ENCODE measurements at regions of chr11 and their contacts with region 1.

Region 1: GRCh38 chr11:102940714-102941588 is 14.6 kb downstream of the MMP13 start:
- H3K4me3 Mint-ChIP-seq: no peak overlapping the region
- H3K27ac Mint-ChIP-seq: peak overlapping the region; percentile 27
- H3K4me1 Mint-ChIP-seq: peaks cover 22% of the 10 kb centered on the region
- H3K27me3 Mint-ChIP-seq: peaks cover 31% of the 10 kb centered on the region

Region 2: DNA sequence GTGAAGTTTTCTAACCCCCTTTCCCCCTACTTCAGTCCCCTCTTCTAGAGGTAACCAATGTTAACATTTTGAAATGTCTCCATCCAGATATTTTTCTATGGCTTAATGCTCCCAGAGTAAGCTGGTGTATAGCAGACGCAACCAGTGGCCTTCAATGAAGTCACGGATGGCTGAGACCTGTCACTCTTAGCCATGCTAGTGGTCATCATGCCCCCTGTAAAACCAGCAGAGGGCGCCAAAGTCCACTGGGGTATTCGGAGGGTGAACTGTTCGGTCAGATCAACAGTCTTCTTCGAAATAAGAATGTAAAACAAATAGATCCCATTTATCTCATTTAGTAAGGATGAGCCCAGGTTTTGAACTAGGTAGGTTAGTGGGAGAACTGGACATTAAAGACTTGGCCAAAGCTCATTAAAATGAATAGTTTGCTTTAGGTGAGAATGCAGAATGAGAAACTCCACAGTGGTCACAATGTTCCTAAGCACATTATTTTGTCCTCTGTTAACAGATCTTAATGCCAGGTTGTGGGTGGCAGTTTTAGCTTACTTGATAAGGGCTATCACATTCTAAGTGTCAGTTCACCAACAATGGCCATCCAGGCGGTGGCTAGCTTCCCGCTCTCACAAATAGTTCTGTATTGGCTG is 207.6 kb before region 1 on chr11:
- intact Hi-C with region 1: loop called (anchors 1 kb)
- H3K4me3 Mint-ChIP-seq: no peak overlapping the region
- H3K27ac Mint-ChIP-seq: no peak overlapping the region
- H3K4me1 Mint-ChIP-seq: peaks cover 16% of the 10 kb centered on the region
- H3K27me3 Mint-ChIP-seq: peaks cover 37% of the 10 kb centered on the region

Region 3: DNA sequence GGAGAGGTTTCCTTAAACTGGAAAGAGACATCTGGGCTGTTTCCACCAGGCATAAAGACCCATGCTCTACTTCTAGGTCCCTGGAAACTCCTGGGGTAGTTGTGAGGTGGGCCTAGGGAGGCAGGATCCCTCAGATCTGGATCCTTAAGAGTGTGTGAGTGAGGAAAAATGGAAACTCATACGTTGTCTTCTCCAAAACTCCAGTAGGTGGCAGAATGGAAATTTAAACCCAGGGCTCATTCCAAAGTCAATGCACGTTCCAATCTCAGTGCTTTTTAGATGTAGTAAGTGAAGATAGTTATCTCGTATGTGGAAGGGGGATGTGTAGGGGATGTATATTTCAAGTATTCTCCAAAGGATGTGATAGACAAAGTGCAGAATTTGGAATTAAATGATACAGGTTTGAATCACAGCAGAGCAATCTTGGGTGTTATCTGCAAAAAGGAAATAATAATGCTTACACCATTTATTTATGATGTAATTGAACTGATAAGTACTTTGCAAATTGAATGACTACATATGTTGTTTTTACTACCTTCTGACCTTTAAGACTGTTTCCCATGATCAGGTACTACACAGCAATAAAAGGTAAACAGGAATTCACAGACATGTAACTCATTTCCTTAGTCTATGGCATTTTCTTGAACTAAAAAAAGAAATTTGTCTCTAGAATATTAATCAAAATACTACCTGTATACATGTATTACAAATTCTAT is 129.8 kb before region 1 on chr11:
- intact Hi-C with region 1: loop called (anchors 2 kb)
- H3K4me3 Mint-ChIP-seq: no peak overlapping the region
- H3K27ac Mint-ChIP-seq: no peak overlapping the region
- H3K4me1 Mint-ChIP-seq: no peaks in the 10 kb centered on the region
- H3K27me3 Mint-ChIP-seq: peaks cover 27% of the 10 kb centered on the region

Region 4: GRCh38 chr11:102882389-102883024 is 58.4 kb before region 1 on chr11:
- intact Hi-C with region 1: loop called (anchors 5 kb)
- H3K4me3 Mint-ChIP-seq: peak overlapping the region; percentile 2
- H3K27ac Mint-ChIP-seq: peak overlapping the region; percentile 95
- H3K4me1 Mint-ChIP-seq: peaks cover 53% of the 10 kb centered on the region
- H3K27me3 Mint-ChIP-seq: peaks cover 5% of the 10 kb centered on the region

Region 5: GRCh38 chr11:102914238-102915043 is 26.5 kb before region 1 on chr11:
- intact Hi-C with region 1: loop called (anchors 1 kb)
- H3K4me3 Mint-ChIP-seq: no peak overlapping the region
- H3K27ac Mint-ChIP-seq: peak overlapping the region; percentile 37
- H3K4me1 Mint-ChIP-seq: peaks cover 22% of the 10 kb centered on the region
- H3K27me3 Mint-ChIP-seq: peaks cover 48% of the 10 kb centered on the region

Region 6: GRCh38 chr11:102927624-102927990 is 13.3 kb before region 1 on chr11:
- intact Hi-C with region 1: loop called (anchors 2 kb)
- H3K4me3 Mint-ChIP-seq: no peak overlapping the region
- H3K27ac Mint-ChIP-seq: no peak overlapping the region
- H3K4me1 Mint-ChIP-seq: peaks cover 46% of the 10 kb centered on the region
- H3K27me3 Mint-ChIP-seq: peaks cover 19% of the 10 kb centered on the region